Naive thymus-derived CD8-positive, alpha-beta T cell (primary cell): ENCODE measurements at regions of chr9 and their contacts with region 1.

Region 1: DNA sequence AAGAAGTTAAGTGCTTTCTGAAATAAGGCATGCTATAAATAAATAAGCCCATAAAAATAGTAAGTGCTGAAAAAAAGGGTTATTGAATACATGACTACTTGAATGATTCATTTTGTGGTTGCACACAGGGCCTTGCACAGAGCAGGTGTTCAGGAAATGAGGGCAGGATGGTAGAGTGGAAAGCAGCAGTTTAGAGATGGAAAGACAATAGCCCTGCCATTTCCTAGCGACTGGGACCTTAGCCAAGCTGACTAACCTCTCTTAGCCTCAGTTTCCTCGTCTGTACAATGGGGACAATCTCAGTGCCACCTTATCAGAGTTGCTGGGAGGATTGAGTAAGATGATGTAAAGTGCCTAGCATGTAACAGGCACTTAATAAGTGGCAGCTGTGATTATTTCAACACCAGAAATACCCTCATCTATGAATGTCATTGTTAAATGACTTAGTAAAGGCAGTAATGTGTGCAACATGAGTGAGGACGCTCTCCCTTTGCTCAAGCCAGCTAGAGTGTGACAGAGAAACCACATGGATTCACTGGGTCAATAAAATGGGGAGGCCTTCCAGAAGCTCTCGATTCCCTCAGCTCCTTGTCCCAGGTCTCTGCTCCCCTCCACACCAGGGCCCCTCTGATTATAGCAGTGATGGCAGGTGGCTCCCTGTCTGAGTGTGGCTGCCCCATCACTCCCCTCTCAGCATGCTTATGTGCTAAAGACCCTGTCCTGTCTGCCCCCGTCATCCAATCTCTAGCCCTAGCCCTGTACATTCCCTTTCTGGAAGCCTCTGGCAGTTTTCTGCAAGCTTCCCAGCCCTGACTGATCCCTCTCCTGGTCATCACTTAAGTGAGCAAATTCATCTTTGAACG is 16.0 kb upstream of the PHF19 start:
- DNase-seq: peak in 7 of 10 donors; percentile 39 to 82 (median 54)
- ATAC-seq: peak; percentile 29 to 61
- H3K4me3 Mint-ChIP-seq: peak overlapping the region in 9 of 10 donors; percentile 58 to 83 (median 77)
- H3K27ac Mint-ChIP-seq: peak overlapping the region; percentile 90 to 99 (median 98)
- H3K4me1 Mint-ChIP-seq: peaks cover 35 to 90% (median 76%) of the 10 kb centered on the region in 4 donors
- H3K27me3 Mint-ChIP-seq: no peaks in the 10 kb centered on the region

Region 2: GRCh38 chr9:120875954-120876841 is 16.8 kb before region 1 on chr9:
- POLR2A ChIA-PET with region 1: interaction called, 320 read pairs
- DNase-seq: peak; percentile 43 to 86 (median 64)
- ATAC-seq: peak; percentile 43 to 44
- H3K4me3 Mint-ChIP-seq: peak overlapping the region; percentile 75 to 91 (median 82)
- H3K27ac Mint-ChIP-seq: peak overlapping the region; percentile 88 to 96 (median 93)
- H3K4me1 Mint-ChIP-seq: peaks cover 34 to 76% (median 66%) of the 10 kb centered on the region in 4 donors
- H3K27me3 Mint-ChIP-seq: no peaks in the 10 kb centered on the region

Region 3: GRCh38 chr9:120904061-120904977 is 11.3 kb after region 1 on chr9:
- POLR2A ChIA-PET with region 1: interaction called, 1,842 read pairs
- DNase-seq: peak; percentile 53 to 86 (median 76)
- ATAC-seq: peak; percentile 70 to 91
- H3K4me3 Mint-ChIP-seq: peak overlapping the region; percentile 40 to 82 (median 66)
- H3K27ac Mint-ChIP-seq: peak overlapping the region; percentile 92 to 100 (median 98)
- H3K4me1 Mint-ChIP-seq: peaks cover 37 to 91% (median 86%) of the 10 kb centered on the region in 4 donors
- H3K27me3 Mint-ChIP-seq: no peaks in the 10 kb centered on the region

Region 4: DNA sequence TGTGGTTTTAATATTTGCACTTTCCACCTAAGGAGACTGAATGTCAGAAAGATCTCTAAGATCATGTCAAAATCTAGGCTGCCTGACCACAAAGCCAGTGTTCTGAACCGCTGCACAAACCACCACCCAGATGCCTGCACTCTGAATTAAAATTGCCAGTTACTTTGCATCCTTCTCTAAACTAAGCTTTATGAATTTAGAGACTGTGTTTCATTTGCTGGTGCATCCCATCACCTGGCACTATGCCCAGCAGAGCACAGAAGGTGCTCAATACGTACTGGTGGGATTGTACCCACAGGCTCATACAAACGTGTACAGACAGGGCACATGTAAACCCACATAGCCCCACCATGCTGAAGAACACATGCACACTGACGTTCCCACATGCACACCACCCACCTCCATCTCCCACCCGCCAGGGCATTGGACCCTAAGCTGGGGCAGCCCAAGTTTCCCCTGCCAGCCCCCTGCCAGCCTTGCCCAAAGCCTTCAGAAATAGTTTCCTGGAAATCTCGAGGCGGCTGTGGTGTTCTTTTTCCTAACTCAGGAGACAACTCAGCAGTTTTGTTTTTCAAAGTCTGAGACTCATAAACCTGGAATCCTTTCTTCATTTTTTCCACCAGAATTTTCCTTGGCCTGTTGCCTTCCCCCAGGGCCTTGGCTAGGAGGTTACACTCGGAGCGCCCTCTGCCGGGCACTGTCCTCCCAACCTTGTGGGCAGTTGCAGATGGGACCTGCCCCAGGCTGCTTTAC is 43.2 kb after region 1 on chr9:
- POLR2A ChIA-PET with region 1: interaction called, 1,842 read pairs
- DNase-seq: peak; percentile 69 to 91 (median 84)
- ATAC-seq: peak; percentile 55 to 72
- H3K4me3 Mint-ChIP-seq: peak overlapping the region; percentile 22 to 73 (median 62)
- H3K27ac Mint-ChIP-seq: peak overlapping the region; percentile 91 to 100 (median 99)
- H3K4me1 Mint-ChIP-seq: peaks cover 36 to 65% (median 62%) of the 10 kb centered on the region in 4 donors
- H3K27me3 Mint-ChIP-seq: no peaks in the 10 kb centered on the region